ENCODE measurements at regions of chr1 and their contacts with region 1.

Region 1: GRCh38 chr1:226827968-226828513 is 42.4 kb upstream of the PSEN2 start:
- DNase-seq: peak; percentile 85 to 96 (median 92)
- ATAC-seq: peak; percentile 99
- H3K4me3 Mint-ChIP-seq: peak overlapping the region; percentile 50 to 76 (median 64)
- H3K27ac Mint-ChIP-seq: peak overlapping the region; percentile 62 to 95 (median 88)
- H3K4me1 Mint-ChIP-seq: peaks cover 16 to 44% (median 38%) of the 10 kb centered on the region in 4 donors
- H3K27me3 Mint-ChIP-seq: no peaks in the 10 kb centered on the region

Region 2: GRCh38 chr1:226626577-226626956 is 201.5 kb before region 1 on chr1:
- POLR2A ChIA-PET with region 1: interaction called, 12 read pairs
- DNase-seq: peak; percentile 65 to 84 (median 77)
- ATAC-seq: peak; percentile 84 to 93
- H3K4me3 Mint-ChIP-seq: peak overlapping the region; percentile 36 to 84 (median 68)
- H3K27ac Mint-ChIP-seq: peak overlapping the region in 9 of 10 donors; percentile 11 to 80 (median 57)
- H3K4me1 Mint-ChIP-seq: peaks cover 22 to 29% (median 27%) of the 10 kb centered on the region in 4 donors
- H3K27me3 Mint-ChIP-seq: no peaks in the 10 kb centered on the region

Region 3: DNA sequence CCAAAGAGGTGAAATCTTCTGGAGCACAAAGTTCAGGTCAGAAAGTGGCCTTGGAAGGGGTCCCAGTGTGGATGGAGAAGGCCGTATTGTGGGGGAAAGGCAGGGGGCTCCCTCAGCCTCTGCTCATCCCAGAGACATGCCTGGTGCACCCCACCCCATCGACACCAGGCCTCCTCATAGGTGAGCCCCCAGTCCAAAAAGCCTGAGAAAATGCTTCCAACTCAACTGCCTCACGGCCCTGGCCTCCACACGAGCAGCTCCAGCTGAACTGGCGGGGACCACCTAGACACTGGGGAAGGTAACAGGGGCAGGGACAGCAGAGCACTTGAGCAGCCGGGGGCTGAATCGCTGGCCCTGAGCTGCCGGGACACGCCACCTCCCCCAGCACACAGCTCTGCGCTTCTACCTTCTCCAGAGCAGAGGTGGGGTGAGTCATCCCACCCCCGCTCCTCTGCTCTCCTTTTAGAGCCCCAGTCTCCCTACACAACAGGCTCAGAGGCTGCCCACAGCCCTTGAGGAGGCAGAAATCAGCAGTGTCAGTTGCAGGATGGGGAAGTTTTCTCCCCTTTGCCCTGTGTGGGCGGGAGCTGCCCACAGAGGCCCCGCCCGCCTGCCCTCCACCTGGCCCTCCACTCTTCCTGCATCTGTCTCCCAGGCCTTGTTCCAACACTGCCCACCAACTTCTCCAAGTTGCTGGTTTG is 185.0 kb before region 1 on chr1:
- POLR2A ChIA-PET with region 1: interaction called, 10 read pairs
- DNase-seq: peak in 4 of 10 donors; percentile 25 to 64 (median 52)
- ATAC-seq: peak; percentile 52 to 69
- H3K4me3 Mint-ChIP-seq: peak overlapping the region; percentile 53 to 86 (median 74)
- H3K27ac Mint-ChIP-seq: peak overlapping the region in 9 of 10 donors; percentile 88 to 97 (median 93)
- H3K4me1 Mint-ChIP-seq: peaks cover 28 to 70% (median 67%) of the 10 kb centered on the region in 4 donors
- H3K27me3 Mint-ChIP-seq: no peaks in the 10 kb centered on the region

Region 4: DNA sequence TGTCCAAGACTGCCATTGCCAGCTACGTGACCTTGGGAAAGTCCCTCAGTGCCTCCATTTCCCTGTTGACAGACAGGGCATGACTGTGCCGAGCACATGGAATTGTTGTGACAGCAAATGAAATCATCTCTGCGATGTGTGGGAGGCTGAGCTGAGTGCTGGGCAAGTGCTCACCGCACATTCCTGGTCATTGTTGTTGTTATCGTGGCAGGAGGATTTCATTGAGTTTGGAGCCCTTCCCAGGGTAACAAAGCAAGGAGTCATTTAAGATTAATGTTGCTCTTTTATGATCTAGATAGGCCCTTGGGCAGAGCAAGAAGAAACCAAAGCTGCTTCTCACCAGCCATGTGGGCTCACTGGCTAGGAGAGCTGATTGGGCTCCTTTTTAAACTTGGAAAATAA is 49.4 kb before region 1 on chr1:
- POLR2A ChIA-PET with region 1: no interaction called
- DNase-seq: no peak
- ATAC-seq: no peak
- H3K4me3 Mint-ChIP-seq: peak overlapping the region in 1 of 10 donors; percentile 91
- H3K27ac Mint-ChIP-seq: peak overlapping the region in 2 of 10 donors; percentile 19 to 63
- H3K4me1 Mint-ChIP-seq: peaks cover 0 to 11% (median 6%) of the 10 kb centered on the region in 4 donors
- H3K27me3 Mint-ChIP-seq: no peaks in the 10 kb centered on the region

Region 5: DNA sequence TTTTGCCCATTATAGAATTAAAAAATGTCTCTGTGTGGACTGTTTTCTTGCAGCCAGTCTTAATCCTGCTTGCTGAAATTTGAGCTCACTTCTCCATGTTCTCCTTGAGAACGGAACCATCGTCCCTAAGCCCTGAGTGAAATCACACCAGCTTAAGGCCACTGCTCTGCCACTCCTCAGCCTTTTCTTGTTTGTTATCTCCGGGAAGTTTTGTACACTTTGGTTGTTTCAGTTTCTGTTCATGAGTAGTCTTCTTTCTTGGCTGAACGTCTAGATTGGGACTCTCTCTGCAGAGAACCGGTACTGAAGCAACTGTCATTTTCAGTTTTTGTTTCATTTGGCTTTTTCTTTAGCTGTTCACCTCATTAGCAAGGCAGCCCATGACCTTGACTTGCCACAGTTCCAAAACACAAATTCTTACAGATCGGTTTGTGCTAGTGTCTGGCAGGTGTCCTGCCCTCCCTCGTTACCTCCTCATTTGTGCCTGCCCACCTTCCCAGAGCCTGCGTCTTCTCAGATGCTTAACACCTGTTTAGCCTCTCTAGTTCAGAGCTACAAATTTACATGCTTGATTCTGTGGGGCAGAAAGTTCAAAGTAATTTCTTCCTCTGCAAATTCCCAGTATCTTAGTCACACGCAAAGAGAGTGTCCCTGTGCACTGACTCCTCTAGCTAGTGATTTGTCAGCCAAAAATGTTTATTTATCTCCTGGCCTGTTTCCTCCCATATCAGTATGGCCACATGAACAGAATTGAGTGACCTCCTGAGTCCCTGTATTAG is 54.8 kb after region 1 on chr1:
- POLR2A ChIA-PET with region 1: no interaction called
- DNase-seq: peak in 5 of 10 donors; percentile 3 to 61 (median 50)
- ATAC-seq: peak; percentile 78 to 82
- H3K4me3 Mint-ChIP-seq: peak overlapping the region; percentile 75 to 84 (median 80)
- H3K27ac Mint-ChIP-seq: peak overlapping the region; percentile 54 to 97 (median 90)
- H3K4me1 Mint-ChIP-seq: peaks cover 25 to 55% (median 50%) of the 10 kb centered on the region in 4 donors
- H3K27me3 Mint-ChIP-seq: no peaks in the 10 kb centered on the region

Region 6: DNA sequence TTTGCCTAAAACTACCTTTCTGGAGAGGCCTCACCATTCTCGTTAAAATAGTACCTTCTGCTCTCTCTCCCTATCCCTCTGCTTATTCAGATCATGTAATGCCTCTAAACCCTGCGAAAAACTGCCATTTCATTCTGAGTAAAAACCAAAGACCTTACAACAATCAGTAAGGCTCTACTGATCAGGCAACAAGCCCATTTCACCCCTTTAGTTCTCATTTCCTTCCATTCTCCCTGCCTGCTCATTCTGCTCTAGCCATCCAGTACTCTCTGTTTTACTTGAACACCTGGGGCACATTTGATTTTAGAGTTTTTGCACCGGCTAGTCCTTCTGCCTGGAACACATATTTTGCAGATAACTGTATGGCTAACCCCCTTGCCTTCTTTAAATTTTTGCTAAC is 299.9 kb after region 1 on chr1:
- POLR2A ChIA-PET with region 1: no interaction called
- DNase-seq: no peak
- ATAC-seq: no peak
- H3K4me3 Mint-ChIP-seq: no peak overlapping the region
- H3K27ac Mint-ChIP-seq: no peak overlapping the region
- H3K4me1 Mint-ChIP-seq: no peaks in the 10 kb centered on the region
- H3K27me3 Mint-ChIP-seq: peaks cover 0 to 1% (median 0%) of the 10 kb centered on the region in 5 donors